ENCODE measurements at regions of chr12 and their contacts with region 1.

Region 1: DNA sequence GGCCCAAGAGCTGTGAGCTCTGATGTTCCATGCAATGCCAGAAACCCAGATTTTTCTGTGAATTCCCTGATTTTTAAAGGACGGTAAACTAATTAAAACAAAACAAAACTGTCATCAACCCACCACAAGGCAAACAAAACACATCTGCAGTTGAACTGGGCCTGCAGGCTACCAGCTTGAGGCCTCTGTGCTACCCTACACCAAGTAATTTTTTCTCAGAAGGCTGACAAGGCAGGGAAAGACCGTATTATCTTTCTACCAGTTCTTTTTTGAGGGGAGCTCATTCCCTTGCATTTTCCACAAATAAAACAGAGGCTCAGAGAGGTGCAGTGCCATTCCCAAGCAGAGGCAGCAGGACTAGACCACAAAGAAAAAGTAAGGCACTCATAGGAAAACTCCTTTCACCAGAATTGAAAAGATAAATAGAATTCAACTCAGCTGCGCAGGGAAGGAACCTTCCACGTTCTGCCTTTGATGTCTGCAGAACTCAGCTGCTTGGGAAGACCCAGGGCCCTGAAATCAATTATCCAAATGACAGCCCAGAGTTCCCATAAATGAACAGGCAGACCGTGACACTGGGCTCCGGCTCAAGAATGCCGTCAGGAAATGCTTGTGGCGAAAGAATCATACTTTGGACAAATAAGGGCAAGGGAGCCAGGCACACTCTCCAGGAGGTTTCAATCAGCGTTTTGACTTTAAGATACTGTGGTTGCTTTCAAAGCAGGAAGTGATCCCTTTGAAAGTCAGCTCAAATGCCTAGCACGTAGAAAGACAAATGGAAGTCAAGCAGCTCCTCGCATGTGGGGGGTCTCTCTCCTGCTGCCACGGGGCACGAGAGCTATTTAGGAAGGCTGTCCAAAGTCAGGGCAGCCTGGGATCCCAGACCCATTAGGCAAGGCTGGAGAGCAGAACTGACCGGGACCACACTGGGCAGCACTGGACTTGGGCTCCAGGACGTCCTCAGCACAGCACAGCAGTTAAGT is 14.1 kb downstream of the KCTD10 start:
- DNase-seq: peak; percentile 98
- H3K4me3 ChIP-seq: peak overlapping the region; percentile 48
- H3K27ac ChIP-seq: peak overlapping the region; percentile 98
- H3K27me3 ChIP-seq: no peaks in the 10 kb centered on the region
- CTCF ChIP-seq: 0 out of 2 replicates have a peak, but pooled peaks have one; percentile 1

Region 2: GRCh38 chr12:109331301-109331952 is 131.6 kb before region 1 on chr12:
- CTCF ChIA-PET with region 1: no interaction called
- POLR2A ChIA-PET with region 1: no interaction called
- DNase-seq: no peak
- H3K4me3 ChIP-seq: no peak overlapping the region
- H3K27ac ChIP-seq: no peak overlapping the region
- H3K27me3 ChIP-seq: peaks cover 17% of the 10 kb centered on the region
- CTCF ChIP-seq: no peak

Region 3: GRCh38 chr12:109418848-109419480 is 44.0 kb before region 1 on chr12:
- CTCF ChIA-PET with region 1: no interaction called
- POLR2A ChIA-PET with region 1: no interaction called
- DNase-seq: no peak
- H3K4me3 ChIP-seq: no peak overlapping the region
- H3K27ac ChIP-seq: no peak overlapping the region
- H3K27me3 ChIP-seq: peaks cover 12% of the 10 kb centered on the region
- CTCF ChIP-seq: no peak

Region 4: DNA sequence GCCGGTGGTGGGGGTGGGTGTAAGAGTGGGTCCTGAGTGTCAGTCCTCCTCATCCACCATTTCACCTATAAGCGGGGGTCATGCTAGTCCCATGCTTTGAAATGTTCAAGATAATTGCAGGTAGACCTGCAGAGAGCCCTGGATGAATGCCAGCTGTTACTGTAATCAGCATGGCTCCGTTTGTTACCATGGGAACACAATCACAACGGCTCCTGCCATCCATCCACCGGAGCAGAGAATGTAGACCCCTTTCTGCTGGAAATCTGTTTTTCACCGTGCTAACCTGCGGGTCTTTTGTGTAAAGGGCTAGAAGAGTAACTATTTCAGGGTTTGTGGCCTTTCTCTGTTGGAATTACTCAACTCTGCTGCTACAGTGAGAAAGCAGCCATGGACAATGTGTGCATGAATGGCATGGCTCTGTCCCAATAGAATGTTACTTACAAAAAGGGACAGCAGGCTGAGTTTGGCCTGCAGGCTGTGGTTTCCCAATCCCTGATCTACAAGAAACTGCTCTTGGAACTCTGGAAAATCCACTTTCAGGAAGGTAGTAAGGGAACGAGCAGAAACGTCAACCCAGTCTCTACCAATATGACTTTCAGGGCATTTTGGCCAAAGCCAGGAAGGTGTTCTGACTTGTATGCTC is 22.0 kb before region 1 on chr12:
- CTCF ChIA-PET with region 1: no interaction called
- POLR2A ChIA-PET with region 1: interaction called, 10 read pairs
- DNase-seq: no peak
- H3K4me3 ChIP-seq: no peak overlapping the region
- H3K27ac ChIP-seq: no peak overlapping the region
- H3K27me3 ChIP-seq: no peaks in the 10 kb centered on the region
- CTCF ChIP-seq: no peak

Region 5: DNA sequence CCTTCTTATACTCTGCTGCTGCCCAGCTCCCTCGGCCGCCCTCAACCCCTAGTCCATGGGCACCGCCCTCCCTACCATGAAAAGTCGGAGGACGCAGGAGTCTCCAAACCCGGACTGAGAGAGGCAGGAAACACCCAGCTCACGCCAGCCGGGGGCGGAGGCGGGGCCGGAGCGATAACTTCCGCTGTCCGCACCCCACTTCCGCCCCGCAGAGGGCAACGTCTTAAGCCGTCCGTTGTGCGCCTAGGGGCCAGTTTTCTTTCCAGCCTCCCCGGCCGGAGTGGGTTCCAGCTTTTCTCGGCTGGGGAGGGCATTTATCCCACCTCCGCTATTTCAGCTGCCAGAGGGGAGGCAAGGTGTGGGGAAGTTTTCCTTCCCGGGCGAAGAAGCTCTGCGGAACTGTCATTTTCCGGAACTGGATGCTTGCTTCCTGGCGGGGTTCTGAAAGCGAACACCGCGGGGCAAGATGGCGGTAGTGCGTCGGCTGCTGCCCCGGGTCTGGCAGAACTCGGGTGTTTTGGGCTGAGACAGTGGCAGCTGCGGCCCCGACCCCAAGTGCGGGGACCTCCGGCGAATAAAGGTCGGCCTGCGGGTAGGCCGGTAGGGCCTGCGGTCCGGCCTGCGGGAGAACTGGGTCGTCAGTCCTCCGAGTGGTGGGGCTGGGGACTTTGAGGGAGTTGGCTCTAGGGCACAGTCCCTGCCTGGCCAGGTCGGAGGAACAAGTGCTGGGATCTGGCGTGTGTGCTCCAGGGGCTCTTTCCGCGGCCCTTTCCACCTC is 14.4 kb after region 1 on chr12 and contains the starts of genes KCTD10 and UBE3B:
- CTCF ChIA-PET with region 1: interaction called, 5 read pairs
- POLR2A ChIA-PET with region 1: interaction called, 12 read pairs
- DNase-seq: peak; percentile 78
- H3K4me3 ChIP-seq: peak within 1 kb of the TSS; percentile 97
- H3K27ac ChIP-seq: peak within 1 kb of the TSS; percentile 98
- H3K27me3 ChIP-seq: no peaks in the 10 kb centered on the region
- CTCF ChIP-seq: no peak
- polyA plus RNA-seq, gene KCTD10: 119 and 128 TPM in 2 replicates
- polyA plus RNA-seq, gene UBE3B: 40.5 and 42.8 TPM in 2 replicates

Measured in AG04450 (cell line).